ENCODE measurements at regions of chr6 and their contacts with region 1.

Region 1: GRCh38 chr6:53854843-53855567 is 60.2 kb downstream of the LRRC1 start:
- DNase-seq: peak; percentile 35 to 47
- H3K4me3 ChIP-seq: no peak overlapping the region
- H3K4me3 Mint-ChIP-seq: peak overlapping the region; percentile 54
- H3K27ac Mint-ChIP-seq: peak overlapping the region; percentile 86
- H3K4me1 ChIP-seq: peaks cover 40% of the 10 kb centered on the region
- H3K4me1 Mint-ChIP-seq: peaks cover 24% of the 10 kb centered on the region
- H3K27me3 ChIP-seq: no peaks in the 10 kb centered on the region
- H3K27me3 Mint-ChIP-seq: no peaks in the 10 kb centered on the region
- CTCF ChIP-seq: no peak

Region 2: GRCh38 chr6:53786832-53787231 is 68.2 kb before region 1 on chr6:
- CTCF ChIA-PET with region 1: no interaction called
- POLR2A ChIA-PET with region 1: no interaction called
- intact Hi-C with region 1: no loop called
- DNase-seq: no peak
- H3K4me3 ChIP-seq: no peak overlapping the region
- H3K4me3 Mint-ChIP-seq: no peak overlapping the region
- H3K27ac Mint-ChIP-seq: no peak overlapping the region
- H3K4me1 ChIP-seq: peaks cover 5% of the 10 kb centered on the region
- H3K4me1 Mint-ChIP-seq: peaks cover 11% of the 10 kb centered on the region
- H3K27me3 ChIP-seq: no peaks in the 10 kb centered on the region
- H3K27me3 Mint-ChIP-seq: no peaks in the 10 kb centered on the region
- CTCF ChIP-seq: no peak

Region 3: GRCh38 chr6:53829698-53830221 is 25.2 kb before region 1 on chr6:
- CTCF ChIA-PET with region 1: no interaction called
- POLR2A ChIA-PET with region 1: no interaction called
- intact Hi-C with region 1: loop called (anchors 2 kb)
- DNase-seq: peak; percentile 35 to 56
- H3K4me3 ChIP-seq: no peak overlapping the region
- H3K4me3 Mint-ChIP-seq: peak overlapping the region; percentile 52
- H3K27ac Mint-ChIP-seq: peak overlapping the region; percentile 27
- H3K4me1 ChIP-seq: peaks cover 87% of the 10 kb centered on the region
- H3K4me1 Mint-ChIP-seq: peaks cover 61% of the 10 kb centered on the region
- H3K27me3 ChIP-seq: no peaks in the 10 kb centered on the region
- H3K27me3 Mint-ChIP-seq: no peaks in the 10 kb centered on the region
- CTCF ChIP-seq: no peak

Region 4: DNA sequence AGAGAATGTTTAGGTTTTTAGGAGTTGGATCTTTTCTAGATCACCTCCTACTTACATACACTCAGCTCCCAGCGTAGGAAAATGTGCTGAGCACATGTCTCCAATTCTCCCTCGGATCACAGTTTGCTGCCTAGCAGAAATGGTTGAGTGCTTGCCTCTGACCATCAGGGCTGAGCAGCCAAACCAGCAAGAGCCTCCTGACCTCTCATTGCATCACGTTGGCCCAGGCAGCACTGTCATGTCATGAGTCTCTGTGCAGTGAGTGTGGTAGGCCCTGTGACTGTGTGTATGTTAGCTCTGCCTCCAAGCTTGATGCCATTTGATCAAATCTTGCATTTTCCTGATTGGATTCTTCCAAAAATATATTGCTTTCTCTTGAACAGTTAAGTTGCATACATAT is 51.8 kb after region 1 on chr6:
- CTCF ChIA-PET with region 1: no interaction called
- POLR2A ChIA-PET with region 1: no interaction called
- intact Hi-C with region 1: no loop called
- DNase-seq: no peak
- H3K4me3 ChIP-seq: no peak overlapping the region
- H3K4me3 Mint-ChIP-seq: no peak overlapping the region
- H3K27ac Mint-ChIP-seq: no peak overlapping the region
- H3K4me1 ChIP-seq: no peaks in the 10 kb centered on the region
- H3K4me1 Mint-ChIP-seq: no peaks in the 10 kb centered on the region
- H3K27me3 ChIP-seq: no peaks in the 10 kb centered on the region
- H3K27me3 Mint-ChIP-seq: no peaks in the 10 kb centered on the region
- CTCF ChIP-seq: no peak

Region 5: GRCh38 chr6:53943395-53943794 is 88.4 kb after region 1 on chr6:
- CTCF ChIA-PET with region 1: no interaction called
- POLR2A ChIA-PET with region 1: no interaction called
- intact Hi-C with region 1: no loop called
- DNase-seq: no peak
- H3K4me3 ChIP-seq: no peak overlapping the region
- H3K4me3 Mint-ChIP-seq: no peak overlapping the region
- H3K27ac Mint-ChIP-seq: no peak overlapping the region
- H3K4me1 ChIP-seq: no peaks in the 10 kb centered on the region
- H3K4me1 Mint-ChIP-seq: peaks cover 8% of the 10 kb centered on the region
- H3K27me3 ChIP-seq: no peaks in the 10 kb centered on the region
- H3K27me3 Mint-ChIP-seq: no peaks in the 10 kb centered on the region
- CTCF ChIP-seq: no peak

Region 6: GRCh38 chr6:54320871-54321270 is 465.9 kb after region 1 on chr6:
- CTCF ChIA-PET with region 1: no interaction called
- POLR2A ChIA-PET with region 1: no interaction called
- intact Hi-C with region 1: no loop called
- DNase-seq: no peak
- H3K4me3 ChIP-seq: no peak overlapping the region
- H3K4me3 Mint-ChIP-seq: no peak overlapping the region
- H3K27ac Mint-ChIP-seq: no peak overlapping the region
- H3K4me1 ChIP-seq: no peaks in the 10 kb centered on the region
- H3K4me1 Mint-ChIP-seq: no peaks in the 10 kb centered on the region
- H3K27me3 ChIP-seq: no peaks in the 10 kb centered on the region
- H3K27me3 Mint-ChIP-seq: peaks cover 2% of the 10 kb centered on the region
- CTCF ChIP-seq: no peak

Measured in Caco-2 (cell line).